T-cell (primary cell): ENCODE measurements at regions of chr4 and their contacts with region 1.

Region 1: GRCh38 chr4:5912614-5913019 is 19.7 kb upstream of the CRMP1 start:
- DNase-seq: no peak
- ATAC-seq: no peak
- H3K4me3 ChIP-seq: no peak overlapping the region
- H3K4me3 Mint-ChIP-seq: no peak overlapping the region
- H3K27ac ChIP-seq: no peak overlapping the region
- H3K27ac Mint-ChIP-seq: no peak overlapping the region
- H3K4me1 ChIP-seq: no peaks in the 10 kb centered on the region
- H3K4me1 Mint-ChIP-seq: peaks cover 0 to 1% (median 0%) of the 10 kb centered on the region in 3 donors
- H3K27me3 ChIP-seq: peaks cover 0 to 12% of the 10 kb centered on the region in 2 experiments
- H3K27me3 Mint-ChIP-seq: peaks cover 3 to 10% of the 10 kb centered on the region in 2 donors

Region 2: GRCh38 chr4:5186271-5187064 is 726.1 kb before region 1 on chr4:
- CTCF ChIA-PET with region 1: no interaction called
- POLR2A ChIA-PET with region 1: interaction called in 1 of 2 experiments, 15 read pairs
- DNase-seq: no peak
- ATAC-seq: peak in 1 of 4 experiments; percentile 24
- H3K4me3 ChIP-seq: no peak overlapping the region
- H3K4me3 Mint-ChIP-seq: no peak overlapping the region
- H3K27ac ChIP-seq: no peak overlapping the region
- H3K27ac Mint-ChIP-seq: no peak overlapping the region
- H3K4me1 ChIP-seq: no peaks in the 10 kb centered on the region
- H3K4me1 Mint-ChIP-seq: no peaks in the 10 kb centered on the region
- H3K27me3 ChIP-seq: peaks cover 0 to 7% of the 10 kb centered on the region in 2 experiments
- H3K27me3 Mint-ChIP-seq: peaks cover 2 to 7% of the 10 kb centered on the region in 2 donors

Region 3: DNA sequence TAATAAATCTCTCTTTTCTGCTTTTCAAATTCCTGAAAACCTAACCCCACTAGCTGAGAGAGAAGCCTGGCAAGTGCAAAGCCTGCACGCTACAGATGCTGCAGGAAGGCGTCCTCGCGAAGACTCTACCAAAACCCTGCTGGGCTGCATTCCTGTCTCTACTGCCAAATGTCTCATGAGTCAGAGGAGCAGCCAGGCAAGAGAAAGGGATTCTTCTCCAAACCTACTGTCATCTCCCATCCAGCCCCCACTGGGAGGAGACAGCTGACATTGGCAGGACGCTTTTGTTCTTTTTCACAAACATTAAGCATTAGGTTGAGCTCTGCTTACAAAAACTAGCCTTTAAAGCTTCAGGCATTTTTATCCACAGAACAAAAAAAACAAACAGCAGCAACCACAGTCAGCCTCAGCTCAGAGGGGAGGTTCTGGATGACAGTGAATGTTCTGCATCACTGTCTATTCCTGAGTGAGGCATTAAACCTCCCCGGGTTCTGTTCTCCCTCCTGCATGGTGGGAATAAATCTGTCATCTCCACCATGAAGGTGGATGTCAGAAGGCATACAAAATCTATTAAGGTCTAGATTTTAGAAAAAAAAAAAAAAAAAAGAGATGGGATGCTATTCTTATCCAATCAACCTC is 37.7 kb before region 1 on chr4:
- CTCF ChIA-PET with region 1: no interaction called
- POLR2A ChIA-PET with region 1: no interaction called
- DNase-seq: no peak
- ATAC-seq: no peak
- H3K4me3 ChIP-seq: no peak overlapping the region
- H3K4me3 Mint-ChIP-seq: no peak overlapping the region
- H3K27ac ChIP-seq: no peak overlapping the region
- H3K27ac Mint-ChIP-seq: no peak overlapping the region
- H3K4me1 ChIP-seq: peaks cover 0 to 4% of the 10 kb centered on the region in 2 experiments
- H3K4me1 Mint-ChIP-seq: peaks cover 0 to 4% (median 0%) of the 10 kb centered on the region in 3 donors
- H3K27me3 ChIP-seq: peaks cover 0 to 8% of the 10 kb centered on the region in 2 experiments
- H3K27me3 Mint-ChIP-seq: peaks cover 13 to 18% of the 10 kb centered on the region in 2 donors

Region 4: DNA sequence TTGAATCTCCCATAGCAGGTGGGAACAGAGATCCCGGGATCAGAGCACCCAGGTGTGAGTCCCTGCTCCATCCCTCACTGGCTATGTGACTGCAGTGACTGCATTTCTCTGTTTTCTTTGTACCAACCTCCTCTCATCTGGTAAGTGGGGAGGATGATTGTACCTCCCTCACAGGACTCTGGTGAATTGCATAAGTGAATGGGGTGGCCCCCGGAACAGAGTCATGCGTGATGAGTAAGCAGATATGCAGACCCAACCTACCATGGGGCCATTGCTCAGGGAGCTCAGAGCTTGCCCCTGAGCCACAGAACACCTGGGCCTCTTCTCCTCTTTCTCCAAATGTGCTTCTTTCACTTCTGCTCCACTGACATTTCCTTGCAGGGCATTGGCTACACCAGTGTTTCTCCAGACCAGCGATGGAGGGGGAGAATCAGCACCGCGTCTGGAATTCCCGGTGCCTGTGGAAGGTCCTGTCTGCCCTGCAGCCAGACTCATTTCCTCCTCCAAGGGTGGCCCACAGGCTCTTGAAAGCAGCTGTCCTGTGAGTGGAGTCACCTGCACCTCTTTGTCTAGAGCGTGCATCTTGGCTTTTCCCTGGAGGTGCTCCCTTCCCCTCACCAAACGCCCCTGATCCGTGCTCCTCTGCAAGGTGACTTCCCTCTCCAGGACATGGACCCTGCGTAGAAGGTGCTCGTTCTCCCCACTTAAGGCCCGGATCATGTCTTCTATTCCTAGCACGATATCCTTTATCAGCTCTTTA is 75.6 kb after region 1 on chr4:
- CTCF ChIA-PET with region 1: no interaction called
- POLR2A ChIA-PET with region 1: no interaction called
- DNase-seq: no peak
- ATAC-seq: no peak
- H3K4me3 ChIP-seq: no peak overlapping the region
- H3K4me3 Mint-ChIP-seq: no peak overlapping the region
- H3K27ac ChIP-seq: no peak overlapping the region
- H3K27ac Mint-ChIP-seq: no peak overlapping the region
- H3K4me1 ChIP-seq: no peaks in the 10 kb centered on the region
- H3K4me1 Mint-ChIP-seq: no peaks in the 10 kb centered on the region
- H3K27me3 ChIP-seq: peaks cover 0 to 8% of the 10 kb centered on the region in 2 experiments
- H3K27me3 Mint-ChIP-seq: peaks cover 0 to 7% of the 10 kb centered on the region in 2 donors

Region 5: DNA sequence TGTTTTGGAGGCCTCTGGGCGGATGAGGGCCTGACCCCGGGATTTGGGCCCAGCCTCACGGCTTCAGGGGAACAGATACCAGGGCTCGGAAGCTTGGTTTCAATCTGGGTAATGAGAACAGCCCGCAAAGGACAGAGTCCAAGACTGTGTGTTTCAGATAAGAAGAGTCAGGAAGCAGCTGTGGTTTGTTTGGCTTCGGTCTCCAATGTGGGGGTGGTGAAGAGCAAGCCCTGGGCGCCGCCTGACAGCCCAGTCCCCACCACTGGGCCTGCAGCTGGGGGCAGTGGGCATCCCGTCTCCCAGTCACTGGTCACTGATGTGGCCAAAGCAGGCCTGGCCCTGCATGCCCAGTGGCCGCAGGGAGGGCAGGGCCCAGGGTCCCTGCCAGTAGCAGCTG is 366.2 kb after region 1 on chr4:
- CTCF ChIA-PET with region 1: no interaction called
- POLR2A ChIA-PET with region 1: no interaction called
- DNase-seq: no peak
- ATAC-seq: peak; percentile 10 to 56 (median 36)
- H3K4me3 ChIP-seq: no peak overlapping the region
- H3K4me3 Mint-ChIP-seq: peak overlapping the region in 1 of 3 donors; percentile 34
- H3K27ac ChIP-seq: no peak overlapping the region
- H3K27ac Mint-ChIP-seq: peak overlapping the region; percentile 22 to 23
- H3K4me1 ChIP-seq: peaks cover 0 to 15% of the 10 kb centered on the region in 2 experiments
- H3K4me1 Mint-ChIP-seq: peaks cover 6 to 14% (median 12%) of the 10 kb centered on the region in 3 donors
- H3K27me3 ChIP-seq: peaks cover 0 to 8% of the 10 kb centered on the region in 2 experiments
- H3K27me3 Mint-ChIP-seq: no peaks in the 10 kb centered on the region